Left colon (tissue), 2 donors: ENCODE measurements at regions of chr16 and their contacts with region 1.

Region 1: DNA sequence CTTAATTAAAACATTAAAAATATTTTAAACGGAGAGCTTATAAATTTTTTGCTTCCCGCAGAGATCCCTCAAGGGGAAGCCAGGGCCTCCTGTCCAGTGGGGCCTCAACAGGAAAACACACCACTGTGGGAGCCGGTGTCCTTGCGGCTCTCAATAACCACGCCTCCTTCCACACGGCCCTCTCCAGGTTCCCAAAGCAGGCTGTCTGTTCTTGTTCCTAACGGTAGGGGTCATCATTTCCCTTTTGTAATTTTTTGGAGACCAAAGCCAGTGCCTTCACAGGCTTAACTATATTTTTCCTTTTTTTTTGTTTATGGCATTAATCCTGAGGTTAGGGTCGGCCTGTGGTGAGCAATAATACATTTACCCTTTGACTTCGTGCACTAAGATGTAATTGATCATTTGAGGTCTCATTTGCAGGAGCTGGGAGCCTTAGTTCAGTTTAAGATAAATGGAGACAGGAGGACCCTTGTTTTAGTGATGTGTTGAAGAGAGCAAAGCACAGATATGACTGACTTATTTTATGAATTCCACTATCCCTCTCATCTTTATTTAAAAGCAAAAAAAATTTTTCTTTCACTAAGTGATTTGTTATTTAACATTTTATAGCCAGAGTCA is 77.5 kb upstream of the N4BP1 start:
- DNase-seq: peak in 1 of 2 donors; percentile 42
- ATAC-seq: peak; percentile 86

Region 2: GRCh38 chr16:49085686-49086085 is 398.2 kb after region 1 on chr16:
- intact Hi-C with region 1: loop called in 1 of 2 experiments (anchors 10 kb)
- DNase-seq: no peak
- ATAC-seq: no peak

Region 3: GRCh38 chr16:49350265-49351095 is 663.0 kb after region 1 on chr16:
- intact Hi-C with region 1: loop called (anchors 5 kb)
- DNase-seq: peak in 1 of 2 donors; percentile 69
- ATAC-seq: peak; percentile 77